ENCODE measurements at regions of chr10 and their contacts with region 1.

Region 1: GRCh38 chr10:62769574-62770242 is 34.8 kb upstream of the ADO start:
- DNase-seq: no peak
- ATAC-seq: peak; percentile 87
- H3K4me3 ChIP-seq: no peak overlapping the region
- H3K27ac ChIP-seq: peak overlapping the region; percentile 56
- H3K4me1 ChIP-seq: peaks cover 31% of the 10 kb centered on the region
- H3K27me3 ChIP-seq: no peaks in the 10 kb centered on the region
- CTCF ChIP-seq: no peak
- EP300 ChIP-seq: no peak
- POLR2A ChIP-seq: no peak
- RAD21 ChIP-seq: no peak

Region 2: DNA sequence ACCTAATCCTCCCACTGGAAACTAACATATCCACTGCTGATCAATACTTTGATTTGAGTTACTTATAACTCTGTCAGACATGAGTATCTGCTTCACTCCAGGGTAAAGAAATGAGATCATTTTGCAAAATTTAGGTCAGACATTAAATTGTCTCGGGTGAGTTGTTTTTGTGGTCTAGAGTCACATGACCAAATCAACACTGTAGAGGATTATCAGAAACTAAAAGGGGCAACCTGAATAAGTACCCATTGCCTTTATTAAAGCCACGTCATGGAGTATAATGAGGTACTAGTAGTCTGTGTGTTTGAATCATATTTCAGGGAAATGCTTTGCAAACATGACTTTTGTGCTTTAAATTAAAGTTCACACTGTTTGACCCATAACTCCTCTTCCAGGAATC is 72.9 kb before region 1 on chr10:
- CTCF ChIA-PET with region 1: no interaction called
- POLR2A ChIA-PET with region 1: no interaction called
- RAD21 ChIA-PET with region 1: no interaction called
- SMC1A ChIA-PET with region 1: interaction called, 10 read pairs
- in situ Hi-C with region 1: no loop called
- intact Hi-C with region 1: no loop called
- DNase-seq: no peak
- ATAC-seq: peak; percentile 62
- H3K4me3 ChIP-seq: no peak overlapping the region
- H3K27ac ChIP-seq: no peak overlapping the region
- H3K4me1 ChIP-seq: peaks cover 2% of the 10 kb centered on the region
- H3K27me3 ChIP-seq: no peaks in the 10 kb centered on the region
- CTCF ChIP-seq: no peak
- EP300 ChIP-seq: no peak
- POLR2A ChIP-seq: no peak
- RAD21 ChIP-seq: no peak

Region 3: DNA sequence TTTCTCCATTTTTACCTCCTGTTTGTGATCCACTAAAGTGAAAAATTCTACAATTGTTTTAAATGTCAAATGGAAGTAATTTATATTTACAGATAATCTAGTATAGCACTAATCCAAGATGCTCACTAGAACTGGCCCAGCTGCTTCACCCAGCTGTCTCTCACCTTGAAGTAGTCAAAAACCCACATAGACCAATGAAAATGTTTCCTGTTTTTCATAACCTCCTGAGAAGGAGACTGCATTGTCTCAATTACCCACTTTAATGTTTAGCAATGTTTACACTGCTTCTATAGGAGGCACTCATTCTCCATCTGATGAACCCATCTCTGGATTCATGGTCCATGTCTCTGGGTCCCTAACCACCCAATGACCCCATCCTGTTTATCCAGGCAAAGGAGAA is 21.3 kb before region 1 on chr10:
- CTCF ChIA-PET with region 1: interaction called, 5 read pairs
- POLR2A ChIA-PET with region 1: interaction called, 4 read pairs
- RAD21 ChIA-PET with region 1: interaction called, 8 read pairs
- SMC1A ChIA-PET with region 1: interaction called, 30 read pairs
- in situ Hi-C with region 1: no loop called
- intact Hi-C with region 1: no loop called
- DNase-seq: no peak
- ATAC-seq: peak; percentile 45
- H3K4me3 ChIP-seq: no peak overlapping the region
- H3K27ac ChIP-seq: no peak overlapping the region
- H3K4me1 ChIP-seq: peaks cover 13% of the 10 kb centered on the region; the same call in 1 of the 2 replicates
- H3K27me3 ChIP-seq: no peaks in the 10 kb centered on the region
- CTCF ChIP-seq: no peak
- EP300 ChIP-seq: no peak
- POLR2A ChIP-seq: no peak
- RAD21 ChIP-seq: peak; percentile 37; the same call in 1 of the 2 replicates

Region 4: DNA sequence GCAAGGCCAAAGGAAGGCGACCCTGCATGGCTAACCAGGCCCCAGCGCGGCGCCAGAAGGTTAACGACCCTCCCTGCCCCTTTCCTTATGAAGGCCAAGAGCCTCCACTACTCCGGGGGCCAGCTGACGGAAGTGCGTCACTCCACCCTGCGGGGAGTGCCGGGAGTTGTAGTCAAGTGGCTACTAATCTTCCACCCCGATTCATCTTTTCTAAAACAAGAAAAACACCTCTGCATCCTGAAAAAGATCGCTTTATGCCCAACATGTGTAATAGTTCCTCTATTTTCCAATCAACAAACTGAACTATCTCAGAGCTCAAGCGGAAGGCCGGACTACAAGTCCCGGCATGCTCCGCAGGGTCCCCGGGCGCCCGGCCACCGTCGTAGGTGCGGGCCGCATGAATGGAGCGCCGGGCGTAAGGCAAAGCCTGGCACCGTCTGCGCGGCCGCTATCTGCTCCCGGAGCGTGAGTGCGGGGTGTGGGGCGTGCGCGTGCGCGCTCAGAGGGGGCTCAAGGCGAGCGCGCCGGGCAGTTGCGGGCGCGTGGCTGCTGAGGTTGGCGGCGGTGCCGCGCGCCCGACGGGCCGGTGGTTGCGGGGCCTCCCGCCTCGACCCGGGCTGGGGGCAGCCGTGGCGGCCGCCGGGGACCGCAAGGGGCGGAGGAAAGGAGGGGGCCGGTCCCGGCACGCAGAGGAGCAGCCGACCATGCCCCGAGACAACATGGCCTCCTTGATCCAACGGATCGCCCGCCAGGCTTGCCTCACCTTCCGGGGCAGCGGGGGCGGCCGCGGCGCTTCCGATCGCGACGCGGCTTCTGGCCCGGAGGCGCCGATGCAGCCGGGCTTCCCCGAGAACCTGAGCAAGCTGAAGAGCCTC is 34.9 kb after region 1 on chr10 and contains the start of gene ADO:
- CTCF ChIA-PET with region 1: interaction called, 6 read pairs
- POLR2A ChIA-PET with region 1: interaction called, 5 read pairs
- RAD21 ChIA-PET with region 1: interaction called, 7 read pairs
- SMC1A ChIA-PET with region 1: interaction called, 17 read pairs
- in situ Hi-C with region 1: no loop called
- intact Hi-C with region 1: no loop called
- DNase-seq: peak; percentile 59
- ATAC-seq: peak; percentile 83
- H3K4me3 ChIP-seq: peak within 1 kb of the TSS; percentile 88
- H3K27ac ChIP-seq: peak within 1 kb of the TSS; percentile 98
- H3K4me1 ChIP-seq: peaks cover 4% of the 10 kb centered on the region; the same call in 1 of the 2 replicates
- H3K27me3 ChIP-seq: no peaks in the 10 kb centered on the region
- CTCF ChIP-seq: no peak
- EP300 ChIP-seq: peak in 1 of 2 experiments; percentile 26; a peak in 1 of 4 replicates
- POLR2A ChIP-seq: peak; percentile 89
- RAD21 ChIP-seq: 0 out of 2 replicates have a peak, but pooled peaks have one; percentile 6
- polyA plus RNA-seq, gene ADO: 4.3 to 8.5 TPM

Measured in GM12878 (cell line).